Posterior vena cava (tissue), 2 donors: ENCODE measurements at regions of chr9 and their contacts with region 1.

Region 1: GRCh38 chr9:34899535-34900158 is 58.4 kb upstream of the PHF24 start:
- DNase-seq: peak; percentile 92

Region 2: DNA sequence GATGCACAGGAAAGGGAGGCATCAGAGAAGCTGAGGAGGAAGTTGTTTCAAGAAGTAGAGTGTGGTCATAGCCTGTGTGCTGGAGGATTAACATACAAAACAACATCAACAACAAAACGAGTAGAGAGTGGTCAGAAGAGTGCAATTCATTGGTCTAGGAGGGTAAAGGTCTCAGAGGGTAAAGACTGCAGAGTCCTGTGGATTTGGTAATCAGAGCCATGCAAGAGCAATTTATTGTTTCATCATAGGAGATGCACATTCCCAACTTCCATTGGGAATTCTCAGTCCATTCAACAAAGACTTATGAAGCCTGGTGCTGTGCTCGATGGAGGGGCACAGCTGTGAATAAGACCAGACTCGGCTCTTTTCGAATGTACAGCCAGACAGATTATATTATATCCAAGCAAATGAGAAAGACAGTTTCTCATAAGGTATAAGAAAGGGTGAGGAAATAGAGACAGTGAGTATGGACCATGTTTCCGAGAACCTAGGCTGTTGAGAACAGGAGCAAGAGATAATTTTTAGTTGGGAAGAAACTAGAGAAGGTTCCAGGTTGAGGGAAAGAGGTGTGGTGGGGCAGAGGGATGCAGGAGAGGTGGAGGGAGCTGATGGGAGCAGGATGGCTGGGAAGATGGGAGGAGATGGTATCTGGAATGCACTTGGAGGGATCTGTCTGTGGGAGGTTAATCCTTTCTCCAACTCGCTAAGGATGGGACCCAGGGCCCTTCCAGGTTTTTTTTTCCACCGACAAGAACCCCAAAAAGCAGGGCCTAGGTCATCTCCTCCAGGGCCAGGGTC is 515.1 kb before region 1 on chr9:
- intact Hi-C with region 1: no loop called
- DNase-seq: no peak

Region 3: GRCh38 chr9:34974664-34975063 is 75.0 kb after region 1 on chr9:
- intact Hi-C with region 1: loop called in 1 of 2 experiments (anchors 10 kb)
- DNase-seq: no peak

Region 4: DNA sequence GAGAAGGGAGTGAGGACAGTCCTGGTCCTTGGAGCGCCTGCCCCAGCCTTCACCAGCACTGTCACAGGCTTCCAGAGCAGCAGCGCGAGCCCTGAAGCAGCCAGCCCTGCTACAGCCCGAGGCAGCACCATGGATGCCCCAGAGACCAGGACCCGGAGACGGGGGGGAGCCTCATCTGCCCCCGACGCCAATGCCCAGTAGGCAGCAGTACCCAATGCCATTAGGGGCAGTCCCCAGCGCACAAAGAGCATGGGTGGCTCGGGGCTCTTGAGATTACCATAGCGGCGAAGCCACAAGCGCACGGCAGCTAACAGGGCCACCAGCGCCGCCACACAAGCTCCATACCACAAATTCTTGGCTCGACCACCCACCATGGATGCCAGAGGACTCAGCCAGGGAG is 191.9 kb after region 1 on chr9:
- intact Hi-C with region 1: loop called in 1 of 2 experiments (anchors 5 kb)
- DNase-seq: no peak